Activated T-helper 2 cell treated with anti-CD3 and anti-CD28 coated beads, Interferon-gamma antibody, Interleukin-2, Interleukin-4, amounts not matched to agents 10 μg/mL and 5 μg/mL and 100 μg/mL, durations not matched to agents 14 hours and 24 hours and 36 hours (primary cell): ENCODE measurements at regions of chr1 and their contacts with region 1.

Region 1: GRCh38 chr1:186865253-186865652 is 36.5 kb downstream of the PLA2G4A start:
- DNase-seq: no peak
- H3K4me3 Mint-ChIP-seq: no peak overlapping the region
- H3K27ac Mint-ChIP-seq: peak overlapping the region; percentile 90
- H3K4me1 Mint-ChIP-seq: peaks cover 35% of the 10 kb centered on the region
- H3K27me3 Mint-ChIP-seq: no peaks in the 10 kb centered on the region

Region 2: GRCh38 chr1:186812570-186812969 is 52.7 kb before region 1 on chr1:
- intact Hi-C with region 1: loop called (anchors 2 kb)
- DNase-seq: no peak
- H3K4me3 Mint-ChIP-seq: no peak overlapping the region
- H3K27ac Mint-ChIP-seq: no peak overlapping the region
- H3K4me1 Mint-ChIP-seq: peaks cover 13% of the 10 kb centered on the region
- H3K27me3 Mint-ChIP-seq: peaks cover 3% of the 10 kb centered on the region

Region 3: GRCh38 chr1:186828611-186829454 is 36.4 kb before region 1 on chr1 and contains the start of gene PLA2G4A:
- intact Hi-C with region 1: loop called (anchors 5 kb)
- DNase-seq: no peak
- H3K4me3 Mint-ChIP-seq: peak within 1 kb of the TSS; percentile 83
- H3K27ac Mint-ChIP-seq: peak within 1 kb of the TSS; percentile 69
- H3K4me1 Mint-ChIP-seq: peaks cover 8% of the 10 kb centered on the region
- H3K27me3 Mint-ChIP-seq: peaks cover 18% of the 10 kb centered on the region
- total RNA-seq, gene PLA2G4A: 27.1 and 28.2 TPM in 2 replicates

Region 4: DNA sequence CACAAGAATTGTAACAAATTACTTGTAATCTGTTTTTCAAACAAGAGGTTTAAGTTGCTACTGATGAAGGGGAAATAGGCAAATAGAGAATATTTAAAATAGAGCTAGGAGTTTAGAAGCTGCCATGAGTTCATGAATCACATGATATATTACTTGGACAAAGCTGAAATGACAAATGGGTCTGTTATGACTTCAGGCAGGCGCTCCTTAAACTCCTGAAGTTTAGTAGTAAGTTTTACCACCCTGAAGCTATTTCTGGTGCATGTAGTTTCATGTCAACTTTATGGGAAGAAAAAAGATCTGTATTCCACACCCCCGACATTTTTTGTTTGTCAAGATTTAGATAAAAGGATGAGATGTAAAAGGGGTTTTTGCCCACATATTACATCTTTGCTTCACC is 21.9 kb after region 1 on chr1:
- intact Hi-C with region 1: loop called (anchors 1 kb)
- DNase-seq: no peak
- H3K4me3 Mint-ChIP-seq: no peak overlapping the region
- H3K27ac Mint-ChIP-seq: peak overlapping the region; percentile 78
- H3K4me1 Mint-ChIP-seq: peaks cover 22% of the 10 kb centered on the region
- H3K27me3 Mint-ChIP-seq: no peaks in the 10 kb centered on the region